ENCODE measurements at regions of chr15 and their contacts with region 1.

Region 1: DNA sequence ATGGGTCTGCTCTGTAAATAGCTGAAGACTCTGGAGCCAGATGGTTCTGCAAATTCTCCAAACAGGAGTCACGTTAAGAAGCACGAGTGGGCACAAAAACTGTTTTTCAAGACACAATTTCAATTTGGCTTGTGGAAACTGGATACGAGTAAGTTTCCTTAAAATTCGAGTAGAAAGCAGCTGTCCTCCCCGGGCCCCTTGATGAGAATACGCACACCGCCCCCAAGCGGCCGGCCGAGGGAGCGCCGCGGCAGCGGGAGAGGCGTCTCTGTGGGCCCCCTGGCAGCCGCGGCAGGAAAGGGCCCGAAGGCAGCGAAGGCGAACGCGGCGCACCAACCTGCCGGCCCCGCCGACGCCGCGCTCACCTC is 778 bp upstream of the THBS1 start:
- H3K4me3 ChIP-seq: peak overlapping the region; percentile 53
- H3K27ac ChIP-seq: peak overlapping the region; percentile 59; the same call in 1 of the 2 replicates
- H3K4me1 ChIP-seq: no peaks in the 10 kb centered on the region
- CTCF ChIP-seq: peak; percentile 50; the same call in 1 of the 2 replicates

Region 2: GRCh38 chr15:39171944-39172368 is 408.1 kb before region 1 on chr15:
- CTCF ChIA-PET with region 1: interaction called, 21 read pairs
- POLR2A ChIA-PET with region 1: interaction called, 18 read pairs
- H3K4me3 ChIP-seq: no peak overlapping the region
- H3K27ac ChIP-seq: no peak overlapping the region
- H3K4me1 ChIP-seq: 0 out of 2 replicates have a peak, but pooled peaks cover 3% of the 10 kb centered on the region
- CTCF ChIP-seq: peak; percentile 74

Region 3: GRCh38 chr15:39195988-39196486 is 384.1 kb before region 1 on chr15:
- CTCF ChIA-PET with region 1: no interaction called
- POLR2A ChIA-PET with region 1: no interaction called
- H3K4me3 ChIP-seq: no peak overlapping the region
- H3K27ac ChIP-seq: no peak overlapping the region
- H3K4me1 ChIP-seq: no peaks in the 10 kb centered on the region
- CTCF ChIP-seq: no peak

Region 4: GRCh38 chr15:39404767-39405181 is 175.3 kb before region 1 on chr15:
- CTCF ChIA-PET with region 1: interaction called, 7 read pairs
- POLR2A ChIA-PET with region 1: interaction called, 15 read pairs
- H3K4me3 ChIP-seq: no peak overlapping the region
- H3K27ac ChIP-seq: no peak overlapping the region
- H3K4me1 ChIP-seq: peaks cover 17% of the 10 kb centered on the region
- CTCF ChIP-seq: no peak

Region 5: GRCh38 chr15:39782441-39783138 is 202.5 kb after region 1 on chr15 and contains the start of gene FSIP1:
- CTCF ChIA-PET with region 1: no interaction called
- POLR2A ChIA-PET with region 1: no interaction called
- H3K4me3 ChIP-seq: peak within 1 kb of the TSS; percentile 85
- H3K27ac ChIP-seq: peak within 1 kb of the TSS; percentile 20; the same call in 1 of the 2 replicates
- H3K4me1 ChIP-seq: peaks cover 12% of the 10 kb centered on the region; the same call in 1 of the 2 replicates
- CTCF ChIP-seq: no peak

Measured in HEK293 (cell line).